ENCODE measurements at regions of chr16 and their contacts with region 1.

Region 1: DNA sequence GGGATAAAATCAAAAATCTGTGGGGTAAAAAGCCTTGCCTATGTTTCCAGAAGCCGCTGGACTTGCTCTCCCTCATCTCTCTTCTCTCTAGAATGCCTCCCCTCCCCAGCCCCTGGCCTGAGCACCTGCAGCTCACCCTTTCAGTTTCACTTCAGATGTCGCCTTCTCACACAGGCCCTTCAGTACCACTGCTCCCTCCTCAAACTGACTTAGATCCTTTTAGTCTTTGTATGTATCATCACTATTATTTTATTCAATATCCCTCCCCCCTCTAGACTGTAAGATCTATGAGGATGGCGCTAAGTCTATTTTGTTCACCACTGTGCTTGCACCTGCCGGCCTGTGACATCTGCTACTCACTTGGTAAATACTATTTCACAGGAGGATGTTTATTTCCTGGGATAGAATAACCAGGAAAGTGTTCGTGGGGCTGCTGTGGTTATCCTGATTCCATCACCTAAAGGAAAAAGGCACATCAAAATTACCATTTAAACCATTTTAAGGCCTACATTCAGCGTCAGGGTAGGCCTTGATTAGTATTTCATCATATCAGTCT is 122.3 kb downstream of the MRTFB start:
- DNase-seq: no peak
- ATAC-seq: peak in 4 of 8 donors; percentile 42 to 53 (median 51)
- H3K4me3 ChIP-seq: peak overlapping the region in 2 of 10 donors; percentile 13 to 15
- H3K27ac ChIP-seq: peak overlapping the region in 3 of 10 donors; percentile 11 to 45 (median 45)
- H3K4me1 ChIP-seq: peaks cover 0 to 83% (median 45%) of the 10 kb centered on the region in 9 donors
- H3K27me3 ChIP-seq: no peaks in the 10 kb centered on the region
- CTCF ChIP-seq: no peak

Region 2: DNA sequence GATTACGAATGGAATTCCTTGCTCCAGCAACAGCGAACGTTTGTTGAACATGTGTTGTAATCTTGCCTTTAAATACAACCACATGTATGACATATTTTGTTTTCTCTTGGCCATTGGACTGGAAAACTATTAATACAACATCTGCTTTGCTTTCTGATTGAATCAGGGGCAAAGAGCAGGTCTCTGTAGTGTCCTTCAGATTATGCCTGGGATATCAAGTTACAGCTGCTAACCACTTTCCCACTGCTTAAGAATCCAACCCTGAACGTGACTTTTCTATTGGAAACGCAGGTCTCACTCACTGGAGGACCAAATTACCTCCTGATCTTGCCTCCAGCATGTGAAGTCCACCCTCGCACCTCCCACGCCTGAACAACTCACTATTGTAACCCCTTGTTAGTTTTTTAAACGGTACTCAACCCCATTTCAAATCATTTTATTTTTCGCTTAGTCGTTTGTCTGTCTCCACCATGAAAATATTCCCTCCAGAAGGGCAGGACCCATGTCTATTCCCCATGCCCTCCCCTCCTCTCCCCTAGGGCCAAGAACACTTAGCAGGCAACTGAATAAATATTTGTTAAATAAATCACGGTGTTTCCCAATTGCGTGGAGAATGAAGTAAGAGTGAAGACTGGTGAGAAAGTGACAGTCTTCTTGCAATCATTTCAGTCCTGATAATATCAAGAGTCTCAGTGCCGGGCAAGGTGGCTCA is 179.7 kb before region 1 on chr16:
- intact Hi-C with region 1: loop called in 2 of 10 experiments (anchors 10 kb)
- DNase-seq: peak in 1 of 2 donors; percentile 50
- ATAC-seq: peak; percentile 44 to 83 (median 72)
- H3K4me3 ChIP-seq: peak overlapping the region in 2 of 10 donors; percentile 6 to 20
- H3K27ac ChIP-seq: peak overlapping the region in 9 of 10 donors; percentile 27 to 82 (median 65)
- H3K4me1 ChIP-seq: peaks cover 9 to 64% (median 51%) of the 10 kb centered on the region in 9 donors
- H3K27me3 ChIP-seq: no peaks in the 10 kb centered on the region
- CTCF ChIP-seq: no peak

Region 3: GRCh38 chr16:14088155-14088753 is 105.1 kb before region 1 on chr16:
- intact Hi-C with region 1: loop called in 4 of 10 experiments (anchors 5 to 10 kb)
- DNase-seq: no peak
- ATAC-seq: peak in 5 of 8 donors; percentile 39 to 90 (median 78)
- H3K4me3 ChIP-seq: no peak overlapping the region
- H3K27ac ChIP-seq: peak overlapping the region in 3 of 10 donors; percentile 15 to 42 (median 17)
- H3K4me1 ChIP-seq: peaks cover 3 to 65% (median 44%) of the 10 kb centered on the region in 9 donors
- H3K27me3 ChIP-seq: no peaks in the 10 kb centered on the region
- CTCF ChIP-seq: no peak

Region 4: GRCh38 chr16:14168146-14168545 is 25.2 kb before region 1 on chr16:
- intact Hi-C with region 1: no loop called
- DNase-seq: no peak
- ATAC-seq: no peak
- H3K4me3 ChIP-seq: no peak overlapping the region
- H3K27ac ChIP-seq: no peak overlapping the region
- H3K4me1 ChIP-seq: peaks cover 0 to 12% (median 0%) of the 10 kb centered on the region in 9 donors
- H3K27me3 ChIP-seq: no peaks in the 10 kb centered on the region
- CTCF ChIP-seq: no peak

Region 5: DNA sequence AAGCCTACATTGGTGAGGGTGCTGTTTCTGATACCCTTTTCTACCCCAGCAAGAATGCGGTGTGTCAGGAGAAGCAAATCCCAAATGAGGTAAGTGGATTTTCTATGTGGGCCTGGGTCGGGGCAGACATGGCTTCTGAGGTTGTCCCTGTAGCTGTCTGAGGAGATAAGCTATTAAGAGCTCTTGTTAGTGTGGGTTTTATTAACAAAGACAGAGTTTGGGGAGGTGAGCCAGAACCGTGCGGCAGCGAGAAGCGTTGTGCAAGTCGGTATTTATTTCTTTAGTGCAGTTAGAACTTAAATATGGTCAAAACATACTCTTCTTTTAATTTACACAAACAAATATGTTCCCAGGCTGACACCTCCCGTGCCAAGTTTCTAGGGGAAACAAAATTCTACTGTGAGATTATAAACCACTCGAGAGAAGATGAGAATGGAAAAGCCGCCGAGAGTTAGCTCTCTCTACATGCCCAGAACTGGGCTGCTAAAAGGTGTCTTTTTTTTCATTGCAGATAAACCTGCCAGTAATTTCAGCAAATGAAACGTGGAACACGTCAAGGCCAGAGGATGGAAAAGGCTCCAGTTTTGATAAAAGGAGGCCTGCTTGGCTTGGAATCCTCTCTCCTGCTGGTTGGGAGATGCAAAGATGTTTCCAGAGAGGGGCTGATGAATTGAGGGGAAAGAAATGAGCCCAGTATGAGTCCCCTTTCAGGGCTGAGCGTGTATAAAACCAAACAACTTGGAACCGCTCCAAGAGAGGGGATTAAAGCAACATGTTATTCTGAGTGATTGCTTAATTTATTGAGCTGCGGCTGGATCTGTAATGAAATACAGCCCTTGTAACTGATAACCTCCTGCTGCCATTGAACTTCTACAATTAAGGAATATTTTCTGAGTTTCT is 132.4 kb after region 1 on chr16:
- intact Hi-C with region 1: no loop called
- DNase-seq: peak in 1 of 2 donors; percentile 30
- ATAC-seq: peak in 7 of 8 donors; percentile 36 to 69 (median 62)
- H3K4me3 ChIP-seq: no peak overlapping the region
- H3K27ac ChIP-seq: peak overlapping the region; percentile 2 to 72 (median 62)
- H3K4me1 ChIP-seq: peaks cover 0 to 36% (median 20%) of the 10 kb centered on the region in 9 donors
- H3K27me3 ChIP-seq: no peaks in the 10 kb centered on the region
- CTCF ChIP-seq: peak in 1 of 9 donors; percentile 13